T-cell (primary cell): ENCODE measurements at regions of chr5 and their contacts with region 1.

Region 1: DNA sequence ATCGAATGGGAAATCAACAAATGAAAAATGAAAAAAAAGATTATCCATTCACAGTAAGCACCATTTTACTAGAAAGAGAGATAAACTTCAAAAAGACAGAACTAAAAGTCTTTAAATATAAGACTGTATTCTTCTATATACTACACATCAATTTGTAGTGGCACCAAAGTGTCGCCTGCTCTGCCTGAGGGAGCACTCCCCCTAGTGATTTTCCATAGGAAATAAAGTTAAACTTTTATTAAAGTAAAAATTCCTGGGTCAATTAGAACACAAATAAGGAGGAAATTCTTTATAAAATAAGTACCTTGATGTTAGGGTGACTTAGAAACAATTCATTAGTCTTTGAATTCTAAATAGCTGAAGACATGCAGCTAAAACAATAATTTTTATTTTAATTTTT is 9.7 kb downstream of the RAD1 start:
- DNase-seq: no peak
- ATAC-seq: no peak
- H3K4me3 ChIP-seq: no peak overlapping the region
- H3K4me3 Mint-ChIP-seq: no peak overlapping the region
- H3K27ac ChIP-seq: no peak overlapping the region
- H3K27ac Mint-ChIP-seq: no peak overlapping the region
- H3K4me1 ChIP-seq: no peaks in the 10 kb centered on the region
- H3K4me1 Mint-ChIP-seq: no peaks in the 10 kb centered on the region
- H3K27me3 ChIP-seq: no peaks in the 10 kb centered on the region
- H3K27me3 Mint-ChIP-seq: no peaks in the 10 kb centered on the region

Region 2: GRCh38 chr5:34869256-34869655 is 36.3 kb before region 1 on chr5:
- CTCF ChIA-PET with region 1: interaction called in 1 of 2 experiments, 14 read pairs
- POLR2A ChIA-PET with region 1: no interaction called
- DNase-seq: no peak
- ATAC-seq: no peak
- H3K4me3 ChIP-seq: no peak overlapping the region
- H3K4me3 Mint-ChIP-seq: no peak overlapping the region
- H3K27ac ChIP-seq: no peak overlapping the region
- H3K27ac Mint-ChIP-seq: no peak overlapping the region
- H3K4me1 ChIP-seq: no peaks in the 10 kb centered on the region
- H3K4me1 Mint-ChIP-seq: no peaks in the 10 kb centered on the region
- H3K27me3 ChIP-seq: no peaks in the 10 kb centered on the region
- H3K27me3 Mint-ChIP-seq: peaks cover 3 to 9% of the 10 kb centered on the region in 2 donors